Naive thymus-derived CD8-positive, alpha-beta T cell (primary cell): ENCODE measurements at regions of chr11 and their contacts with region 1.

Region 1: DNA sequence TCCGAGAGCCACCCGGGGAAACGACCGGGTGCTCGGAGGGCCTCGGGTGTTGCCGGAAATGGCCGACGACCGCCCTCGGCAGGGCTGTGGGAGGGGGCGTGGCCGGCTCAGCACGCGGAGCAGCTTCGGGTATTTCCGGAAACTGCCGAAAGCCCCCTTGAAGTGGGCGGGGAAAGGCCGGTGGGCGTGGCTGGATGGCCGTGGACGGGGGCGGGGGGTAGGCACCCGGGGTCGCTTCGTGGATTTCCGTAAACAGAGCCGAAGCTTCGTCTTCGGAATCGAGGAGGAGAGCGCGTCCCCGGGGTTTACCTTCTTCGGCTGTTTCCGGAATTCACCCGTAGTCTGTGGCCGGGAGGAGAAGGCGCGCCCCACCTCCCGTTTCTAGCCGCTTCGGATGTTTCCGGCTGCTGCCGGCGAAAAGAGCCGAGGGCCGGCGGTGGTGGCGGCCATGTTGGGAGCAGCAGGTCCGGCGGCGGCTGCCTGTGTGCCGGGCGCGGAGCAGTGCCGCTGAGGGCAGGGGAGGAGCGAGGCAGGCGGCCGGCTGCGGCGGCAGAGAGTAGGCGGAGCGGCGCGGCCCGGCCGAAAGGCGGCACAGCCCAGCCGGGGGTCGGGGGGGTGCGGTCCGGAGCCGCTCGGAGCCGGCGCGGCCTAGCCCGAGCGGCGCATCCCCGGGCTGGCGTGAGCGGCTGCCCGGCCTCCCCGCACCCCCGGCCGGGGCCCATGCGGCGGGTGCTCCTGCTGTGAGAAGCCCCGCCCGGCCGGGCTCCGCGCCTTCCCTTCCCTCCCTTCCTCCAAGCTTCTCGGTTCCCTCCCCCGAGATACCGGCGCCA is at the start of gene MARK2:
- DNase-seq: peak; percentile 99 to 100 (median 100)
- ATAC-seq: peak; percentile 87
- H3K4me3 Mint-ChIP-seq: peak within 1 kb of the TSS; percentile 84 to 97 (median 91)
- H3K27ac Mint-ChIP-seq: peak within 1 kb of the TSS; percentile 87 to 98 (median 92)
- H3K4me1 Mint-ChIP-seq: peaks cover 46 to 60% (median 56%) of the 10 kb centered on the region in 4 donors
- H3K27me3 Mint-ChIP-seq: no peaks in the 10 kb centered on the region
- polyA plus RNA-seq, gene MARK2: 37.0 to 57.0 (median 40.3) TPM

Region 2: DNA sequence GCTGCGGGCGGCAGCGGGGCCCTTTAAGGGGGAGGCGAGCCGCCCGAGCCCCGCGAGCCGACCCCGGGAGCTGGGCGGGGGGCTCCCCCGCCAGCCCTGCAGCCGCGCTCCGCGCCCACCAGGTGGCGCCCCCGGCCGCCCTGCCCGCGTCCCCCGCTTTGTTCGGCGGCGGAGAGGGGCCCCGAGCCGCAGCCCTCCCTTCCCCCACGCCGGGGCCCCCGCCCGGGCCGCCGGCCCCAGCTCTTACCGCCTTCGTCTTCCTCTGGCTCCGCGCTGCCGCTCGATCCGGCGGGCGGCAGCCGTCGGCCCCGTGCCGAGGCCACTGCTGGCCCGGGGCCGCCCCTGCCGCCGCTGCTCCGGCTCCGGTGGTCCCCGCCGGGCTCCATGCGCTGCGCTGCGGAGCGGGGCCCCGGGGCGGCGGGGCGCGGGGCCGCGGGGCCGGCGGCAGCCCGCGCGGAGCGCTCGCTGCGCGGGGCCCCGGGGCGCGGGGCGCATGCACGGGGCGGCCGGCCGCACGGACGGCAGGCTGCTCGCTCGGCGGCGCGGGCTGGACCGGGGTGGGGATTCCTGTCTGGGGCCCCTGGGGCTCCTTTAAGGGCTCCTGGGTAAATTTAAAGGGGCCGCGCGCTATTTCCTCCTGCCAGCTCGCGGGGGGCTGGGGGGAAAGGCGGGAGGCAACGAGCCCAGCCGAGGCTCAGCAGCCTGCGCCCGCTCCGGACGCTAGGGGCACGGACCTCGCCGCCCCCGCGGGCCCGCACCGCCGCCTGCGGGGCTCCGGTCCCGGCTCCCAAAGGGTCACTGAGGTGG is 70.5 kb before region 1 on chr11 and contains the start of gene ZFTA:
- POLR2A ChIA-PET with region 1: interaction called, 16 read pairs
- DNase-seq: peak; percentile 53 to 84 (median 73)
- ATAC-seq: peak; percentile 67 to 76
- H3K4me3 Mint-ChIP-seq: peak within 1 kb of the TSS; percentile 87 to 98 (median 94)
- H3K27ac Mint-ChIP-seq: peak within 1 kb of the TSS; percentile 70 to 95 (median 92)
- H3K4me1 Mint-ChIP-seq: peaks cover 7 to 25% (median 16%) of the 10 kb centered on the region in 4 donors
- H3K27me3 Mint-ChIP-seq: peaks cover 0 to 13% (median 4%) of the 10 kb centered on the region in 5 donors
- polyA plus RNA-seq, gene ZFTA: 0.09 to 0.56 (median 0.34) TPM

Region 3: GRCh38 chr11:63862923-63863322 is 24.0 kb after region 1 on chr11:
- POLR2A ChIA-PET with region 1: interaction called, 14 read pairs
- DNase-seq: peak in 2 of 10 donors; percentile 10 to 26
- ATAC-seq: peak; percentile 47 to 53
- H3K4me3 Mint-ChIP-seq: peak overlapping the region in 9 of 10 donors; percentile 1 to 67 (median 28)
- H3K27ac Mint-ChIP-seq: peak overlapping the region; percentile 30 to 96 (median 86)
- H3K4me1 Mint-ChIP-seq: peaks cover 26 to 74% (median 52%) of the 10 kb centered on the region in 4 donors
- H3K27me3 Mint-ChIP-seq: no peaks in the 10 kb centered on the region

Region 4: GRCh38 chr11:63888170-63889086 is 49.5 kb after region 1 on chr11:
- POLR2A ChIA-PET with region 1: interaction called, 34 read pairs
- DNase-seq: peak; percentile 51 to 86 (median 66)
- ATAC-seq: peak; percentile 83 to 88
- H3K4me3 Mint-ChIP-seq: peak overlapping the region; percentile 88 to 98 (median 94)
- H3K27ac Mint-ChIP-seq: peak overlapping the region; percentile 88 to 96 (median 94)
- H3K4me1 Mint-ChIP-seq: peaks cover 46 to 90% (median 81%) of the 10 kb centered on the region in 4 donors
- H3K27me3 Mint-ChIP-seq: no peaks in the 10 kb centered on the region

Region 5: DNA sequence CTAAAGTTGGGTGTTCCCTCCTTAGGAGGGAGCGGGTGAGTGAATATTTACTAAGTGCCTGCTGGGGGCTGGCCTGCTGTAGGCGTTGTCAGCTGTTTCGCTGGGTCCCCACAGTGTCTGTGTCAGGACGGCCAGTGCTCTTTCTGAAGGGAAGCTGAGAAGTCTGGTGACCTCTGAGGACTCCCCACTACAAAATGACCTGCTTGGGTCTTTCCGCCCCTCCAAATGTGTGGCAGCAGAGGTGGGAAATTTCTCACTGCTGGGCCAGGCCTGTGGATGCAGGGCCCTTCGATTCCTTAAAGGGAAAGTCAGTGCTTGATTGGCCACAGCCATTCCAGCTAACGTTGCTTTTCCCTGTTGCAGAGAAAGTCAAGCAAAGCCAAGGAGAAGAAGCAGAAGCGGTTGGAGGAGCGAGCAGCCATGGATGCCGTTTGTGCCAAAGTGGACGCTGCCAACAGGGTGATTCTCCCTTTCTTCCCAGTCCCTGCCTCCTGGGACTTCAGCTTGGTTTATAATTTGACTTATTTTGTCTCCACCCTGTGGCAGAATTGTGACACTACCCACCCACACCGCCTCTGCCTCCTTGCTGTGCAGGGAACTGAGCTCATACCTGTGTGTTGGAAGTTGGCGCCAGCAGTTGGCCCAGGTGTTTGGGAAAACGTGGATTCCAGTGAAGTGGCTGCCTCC is 106.7 kb after region 1 on chr11:
- POLR2A ChIA-PET with region 1: interaction called, 26 read pairs
- DNase-seq: peak; percentile 15 to 74 (median 47)
- ATAC-seq: peak; percentile 78 to 84
- H3K4me3 Mint-ChIP-seq: no peak overlapping the region
- H3K27ac Mint-ChIP-seq: peak overlapping the region in 1 of 10 donors; percentile 62
- H3K4me1 Mint-ChIP-seq: peaks cover 2 to 23% (median 13%) of the 10 kb centered on the region in 4 donors
- H3K27me3 Mint-ChIP-seq: no peaks in the 10 kb centered on the region